ENCODE measurements at regions of chr11 and their contacts with region 1.

Region 1: GRCh38 chr11:17504330-17505107 is 27.9 kb upstream of the ABCC8 start:
- DNase-seq: peak; percentile 64 to 73 (median 71)
- H3K4me3 ChIP-seq: no peak overlapping the region
- H3K4me3 Mint-ChIP-seq: no peak overlapping the region
- H3K27ac ChIP-seq: no peak overlapping the region
- H3K27ac Mint-ChIP-seq: peak overlapping the region in 1 of 7 donors; percentile 47
- H3K4me1 ChIP-seq: no peaks in the 10 kb centered on the region
- H3K4me1 Mint-ChIP-seq: peaks cover 0 to 2% (median 0%) of the 10 kb centered on the region in 4 donors
- H3K27me3 ChIP-seq: no peaks in the 10 kb centered on the region
- H3K27me3 Mint-ChIP-seq: peaks cover 3 to 6% of the 10 kb centered on the region in 2 donors

Region 2: GRCh38 chr11:16935518-16936302 is 568.8 kb before region 1 on chr11:
- CTCF ChIA-PET with region 1: interaction called, 5 read pairs
- POLR2A ChIA-PET with region 1: no interaction called
- intact Hi-C with region 1: loop called (anchors 5 kb)
- DNase-seq: peak in 2 of 5 donors; percentile 11 to 13
- H3K4me3 ChIP-seq: no peak overlapping the region
- H3K4me3 Mint-ChIP-seq: no peak overlapping the region
- H3K27ac ChIP-seq: no peak overlapping the region
- H3K27ac Mint-ChIP-seq: no peak overlapping the region
- H3K4me1 ChIP-seq: no peaks in the 10 kb centered on the region
- H3K4me1 Mint-ChIP-seq: peaks cover 0 to 4% (median 1%) of the 10 kb centered on the region in 4 donors
- H3K27me3 ChIP-seq: no peaks in the 10 kb centered on the region
- H3K27me3 Mint-ChIP-seq: peaks cover 0 to 1% of the 10 kb centered on the region in 2 donors

Region 3: GRCh38 chr11:17389211-17389956 is 115.1 kb before region 1 on chr11:
- CTCF ChIA-PET with region 1: interaction called, 98 read pairs
- POLR2A ChIA-PET with region 1: no interaction called
- intact Hi-C with region 1: loop called (anchors 1 kb)
- DNase-seq: peak; percentile 76 to 82 (median 77)
- H3K4me3 ChIP-seq: peak overlapping the region; percentile 17 to 54
- H3K4me3 Mint-ChIP-seq: peak overlapping the region; percentile 77 to 90 (median 84)
- H3K27ac ChIP-seq: no peak overlapping the region
- H3K27ac Mint-ChIP-seq: peak overlapping the region in 6 of 7 donors; percentile 36 to 68 (median 39)
- H3K4me1 ChIP-seq: peaks cover 5% of the 10 kb centered on the region
- H3K4me1 Mint-ChIP-seq: peaks cover 0 to 8% (median 3%) of the 10 kb centered on the region in 4 donors
- H3K27me3 ChIP-seq: no peaks in the 10 kb centered on the region
- H3K27me3 Mint-ChIP-seq: peaks cover 0 to 2% of the 10 kb centered on the region in 2 donors

Region 4: GRCh38 chr11:17519061-17519885 is 14.8 kb after region 1 on chr11:
- CTCF ChIA-PET with region 1: interaction called, 14 read pairs
- POLR2A ChIA-PET with region 1: no interaction called
- intact Hi-C with region 1: no loop called
- DNase-seq: no peak
- H3K4me3 ChIP-seq: no peak overlapping the region
- H3K4me3 Mint-ChIP-seq: no peak overlapping the region
- H3K27ac ChIP-seq: no peak overlapping the region
- H3K27ac Mint-ChIP-seq: peak overlapping the region in 1 of 7 donors; percentile 32
- H3K4me1 ChIP-seq: no peaks in the 10 kb centered on the region
- H3K4me1 Mint-ChIP-seq: no peaks in the 10 kb centered on the region
- H3K27me3 ChIP-seq: no peaks in the 10 kb centered on the region
- H3K27me3 Mint-ChIP-seq: peaks cover 0 to 4% of the 10 kb centered on the region in 2 donors

Measured in CD4-positive, alpha-beta memory T cell (primary cell).